ENCODE measurements at regions of chr9 and their contacts with region 1.

Region 1: GRCh38 chr9:72827950-72828731 is 124.7 kb downstream of the ALDH1A1 start:
- DNase-seq: no peak
- H3K4me3 ChIP-seq: no peak overlapping the region
- H3K27ac ChIP-seq: peak overlapping the region in 1 of 2 donors; percentile 60
- H3K4me1 ChIP-seq: no peaks in the 10 kb centered on the region
- H3K27me3 ChIP-seq: no peaks in the 10 kb centered on the region
- CTCF ChIP-seq: no peak
- EP300 ChIP-seq: no peak
- POLR2A ChIP-seq: no peak

Region 2: GRCh38 chr9:72038890-72039410 is 789.2 kb before region 1 on chr9:
- intact Hi-C with region 1: loop called in 1 of 4 experiments (anchors 10 kb)
- DNase-seq: peak; percentile 59 to 81 (median 79)
- H3K4me3 ChIP-seq: no peak overlapping the region
- H3K27ac ChIP-seq: no peak overlapping the region
- H3K4me1 ChIP-seq: peaks cover 2% of the 10 kb centered on the region
- H3K27me3 ChIP-seq: no peaks in the 10 kb centered on the region
- CTCF ChIP-seq: peak; percentile 81 to 83 (median 82)
- EP300 ChIP-seq: no peak
- POLR2A ChIP-seq: no peak

Region 3: DNA sequence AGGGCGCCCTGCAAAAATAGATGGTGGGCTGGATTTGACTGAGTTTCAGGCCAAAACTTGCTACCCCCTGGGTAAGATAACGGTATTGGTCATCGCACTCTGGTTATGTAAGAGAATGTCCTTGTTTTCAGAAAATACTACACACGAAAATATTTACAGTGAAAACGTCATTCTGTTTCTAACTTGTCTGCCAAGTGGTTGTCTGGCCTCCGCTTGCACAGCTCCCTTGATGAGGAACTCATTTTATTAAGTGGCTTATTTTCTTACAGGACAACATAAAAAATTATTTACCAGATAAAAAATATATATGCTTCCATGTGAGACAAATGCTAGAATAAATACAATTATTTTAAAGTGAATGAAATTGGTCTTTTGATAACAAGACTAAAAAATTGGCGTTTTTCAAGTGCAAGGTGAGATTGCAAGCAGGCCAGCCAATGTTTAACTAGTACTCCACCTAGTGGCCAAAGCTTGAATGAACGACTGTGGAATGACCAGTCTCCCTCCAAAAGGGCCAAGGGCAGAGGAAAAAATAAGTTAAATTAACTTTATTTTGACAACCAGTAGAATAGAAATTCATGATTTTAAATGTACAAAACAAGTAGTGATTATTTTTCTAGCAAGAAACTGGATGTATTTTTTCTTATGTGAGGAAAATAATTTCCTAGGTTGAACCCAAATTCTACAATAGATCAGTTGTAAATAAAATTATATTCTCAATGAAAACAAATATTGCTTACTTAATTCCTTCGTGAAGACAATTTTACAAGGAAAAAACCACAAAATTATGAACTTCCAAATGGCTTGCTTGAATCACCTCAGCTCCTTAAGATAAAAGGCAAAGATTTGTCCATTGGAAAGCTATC is 556.3 kb before region 1 on chr9:
- intact Hi-C with region 1: loop called in 1 of 4 experiments (anchors 10 kb)
- DNase-seq: peak in 3 of 5 donors; percentile 21 to 54 (median 49)
- H3K4me3 ChIP-seq: no peak overlapping the region
- H3K27ac ChIP-seq: peak overlapping the region in 1 of 2 donors; percentile 6
- H3K4me1 ChIP-seq: no peaks in the 10 kb centered on the region
- H3K27me3 ChIP-seq: no peaks in the 10 kb centered on the region
- CTCF ChIP-seq: peak; percentile 49 to 79 (median 69)
- EP300 ChIP-seq: no peak
- POLR2A ChIP-seq: no peak

Region 4: DNA sequence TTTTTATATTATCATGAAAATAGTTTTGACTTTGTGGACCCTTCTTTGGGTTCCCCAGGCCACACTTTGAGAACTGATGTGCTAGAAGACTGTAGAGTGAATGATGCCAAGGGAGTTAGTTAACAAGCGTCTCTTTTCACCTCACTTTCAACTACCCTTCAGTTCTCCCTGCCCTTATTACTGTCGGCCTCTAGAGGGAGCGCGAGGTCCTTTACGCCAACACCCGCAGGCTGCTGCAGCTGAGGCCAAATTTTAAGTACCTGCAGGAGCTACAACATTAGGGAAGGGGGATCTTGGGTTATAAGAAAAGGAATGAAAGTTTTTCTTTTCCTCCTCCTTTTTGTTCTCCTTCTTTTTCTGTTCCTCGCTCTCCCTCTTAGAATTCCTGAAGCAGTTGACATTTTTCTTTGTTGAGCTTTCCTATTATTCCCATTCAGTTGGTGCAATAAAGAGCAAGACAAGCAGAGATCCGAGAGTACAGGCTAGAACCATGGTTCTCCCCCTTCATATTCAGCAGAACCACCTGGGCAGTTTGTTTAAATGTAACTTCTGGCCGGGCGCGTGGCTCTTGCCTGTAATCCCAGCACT is 547.1 kb before region 1 on chr9:
- intact Hi-C with region 1: loop called in 2 of 4 experiments (anchors 5 to 10 kb)
- DNase-seq: peak; percentile 57 to 80 (median 75)
- H3K4me3 ChIP-seq: no peak overlapping the region
- H3K27ac ChIP-seq: no peak overlapping the region
- H3K4me1 ChIP-seq: no peaks in the 10 kb centered on the region
- H3K27me3 ChIP-seq: no peaks in the 10 kb centered on the region
- CTCF ChIP-seq: peak; percentile 59 to 82 (median 77)
- EP300 ChIP-seq: no peak
- POLR2A ChIP-seq: no peak